ENCODE measurements at regions of chr2 and their contacts with region 1.

Region 1: GRCh38 chr2:171136024-171136423 is 24.7 kb downstream of the TLK1 start:
- DNase-seq: no peak
- H3K4me3 Mint-ChIP-seq: no peak overlapping the region
- H3K27ac Mint-ChIP-seq: peak overlapping the region; percentile 90
- H3K4me1 Mint-ChIP-seq: peaks cover 19% of the 10 kb centered on the region
- H3K27me3 Mint-ChIP-seq: no peaks in the 10 kb centered on the region

Region 2: GRCh38 chr2:171018522-171018921 is 117.5 kb before region 1 on chr2:
- intact Hi-C with region 1: loop called (anchors 5 kb)
- DNase-seq: no peak
- H3K4me3 Mint-ChIP-seq: no peak overlapping the region
- H3K27ac Mint-ChIP-seq: peak overlapping the region; percentile 46
- H3K4me1 Mint-ChIP-seq: peaks cover 11% of the 10 kb centered on the region
- H3K27me3 Mint-ChIP-seq: no peaks in the 10 kb centered on the region

Region 3: DNA sequence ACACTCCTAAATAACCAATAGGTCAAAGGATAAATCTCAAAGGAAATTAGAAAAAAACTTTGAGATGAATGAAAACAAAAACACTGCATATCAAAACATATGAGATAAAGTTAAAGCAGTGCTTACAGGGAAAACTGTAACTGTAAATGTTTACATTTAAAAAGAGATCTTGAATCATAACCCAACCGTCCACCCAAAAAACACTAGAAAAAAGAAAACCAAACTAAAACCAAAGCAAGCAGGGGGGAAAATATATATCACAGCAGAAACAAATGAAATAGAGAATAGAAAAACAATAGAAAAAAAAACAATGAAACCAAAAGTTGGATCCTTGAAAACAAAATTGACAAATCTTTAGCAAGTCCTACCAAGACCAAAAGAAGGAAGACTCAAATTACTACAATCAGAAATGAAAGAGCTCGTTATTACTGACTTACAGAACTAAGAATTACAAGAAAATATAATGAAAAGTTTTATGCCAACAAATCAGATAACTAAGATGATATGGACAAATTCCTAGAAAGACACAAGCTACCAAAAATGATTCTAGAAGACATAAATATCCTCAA is 40.9 kb before region 1 on chr2:
- intact Hi-C with region 1: loop called (anchors 2 kb)
- DNase-seq: no peak
- H3K4me3 Mint-ChIP-seq: peak overlapping the region; percentile 7
- H3K27ac Mint-ChIP-seq: peak overlapping the region; percentile 72
- H3K4me1 Mint-ChIP-seq: peaks cover 26% of the 10 kb centered on the region
- H3K27me3 Mint-ChIP-seq: no peaks in the 10 kb centered on the region

Region 4: DNA sequence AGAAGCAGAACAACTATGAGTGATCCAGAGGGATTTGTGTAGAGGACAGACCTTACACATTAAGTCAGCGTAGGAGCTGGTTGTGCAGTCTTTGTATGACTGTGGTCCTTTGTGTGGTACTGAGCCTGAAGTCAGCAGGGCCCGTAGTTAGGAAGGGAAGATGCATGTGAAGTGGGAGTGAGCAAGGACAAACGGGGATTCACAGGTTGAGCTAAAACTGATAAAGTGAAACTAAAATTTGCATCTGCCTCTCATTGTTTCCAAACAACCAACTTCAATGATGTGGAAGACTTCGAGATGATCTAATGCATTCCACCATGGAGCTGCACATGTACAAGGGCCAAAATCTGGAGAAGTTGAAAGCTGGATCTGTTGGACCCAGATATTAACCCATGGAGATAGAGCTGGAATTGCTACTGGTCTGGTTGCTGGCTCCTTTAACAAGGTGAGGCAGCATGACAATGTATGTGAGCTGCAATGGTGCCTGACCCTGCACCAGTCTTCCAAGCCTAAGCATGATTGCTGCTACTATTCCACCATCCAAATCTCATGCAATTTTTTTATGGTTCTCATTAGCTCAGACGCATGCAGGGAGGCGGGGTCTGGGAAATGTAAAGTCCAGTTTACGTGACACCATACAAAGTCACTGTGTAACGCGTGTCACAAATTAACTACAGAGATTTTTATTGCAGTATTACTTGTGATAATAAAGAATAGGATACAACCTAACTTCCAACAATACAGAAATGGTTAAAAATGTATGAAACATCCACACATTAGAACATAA is 374.1 kb after region 1 on chr2:
- intact Hi-C with region 1: no loop called
- DNase-seq: no peak
- H3K4me3 Mint-ChIP-seq: no peak overlapping the region
- H3K27ac Mint-ChIP-seq: no peak overlapping the region
- H3K4me1 Mint-ChIP-seq: peaks cover 9% of the 10 kb centered on the region
- H3K27me3 Mint-ChIP-seq: peaks cover 7% of the 10 kb centered on the region

Measured in activated CD4-positive, alpha-beta T cell treated with anti-CD3 and anti-CD28 coated beads, Interleukin-2, amount 10 ng/mL, durations not matched to agents 24 days and 14 days (primary cell).